ENCODE measurements at regions of chr3 and their contacts with region 1.

Region 1: DNA sequence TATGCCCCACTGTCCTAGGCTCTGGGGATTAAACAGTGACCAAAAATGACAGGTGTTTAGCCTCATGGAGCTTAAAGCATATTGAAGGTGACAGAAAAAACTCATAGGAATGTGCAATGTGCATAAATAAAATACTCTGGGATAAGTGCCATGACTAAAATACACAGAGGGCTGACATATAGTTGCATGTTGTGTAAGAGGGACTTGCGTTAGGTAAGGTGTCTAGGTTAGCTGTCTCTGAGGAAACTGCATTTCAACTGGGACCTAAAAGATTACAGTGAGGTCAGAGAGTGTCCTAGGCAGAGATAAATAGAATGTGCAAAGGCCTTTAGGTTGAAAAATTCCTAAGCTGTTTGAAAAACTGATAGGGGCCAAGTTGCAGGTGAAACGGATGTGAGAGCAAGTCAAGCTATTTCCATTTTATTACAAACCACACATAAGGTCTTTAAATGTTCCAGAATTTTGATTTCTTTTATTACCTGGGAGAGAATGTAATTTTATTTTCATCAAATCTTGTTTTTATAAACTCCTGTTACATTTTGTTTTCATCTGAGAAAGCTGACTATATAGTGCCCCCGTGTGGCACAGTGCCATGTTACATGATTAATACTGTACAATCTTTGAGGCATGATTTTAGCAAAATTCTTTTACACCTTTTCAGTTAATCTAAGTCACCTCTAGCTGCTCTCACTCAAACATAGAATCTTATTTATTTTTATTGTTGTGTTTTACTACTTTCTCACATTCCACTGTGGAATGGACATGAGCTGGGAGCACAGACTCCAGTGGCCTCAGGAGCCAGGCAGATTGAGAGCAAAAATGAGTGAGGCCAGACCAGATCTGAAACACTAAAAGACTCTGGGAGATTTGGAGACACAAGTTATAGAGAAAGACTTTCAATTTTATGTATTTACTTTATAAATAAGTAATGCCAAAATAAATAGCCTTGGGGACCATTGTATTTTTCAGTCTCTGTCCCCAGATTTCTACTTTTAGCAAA is 259.6 kb upstream of the ZNF717 start:
- DNase-seq: peak; percentile 47
- H3K4me3 Mint-ChIP-seq: no peak overlapping the region
- H3K27ac Mint-ChIP-seq: no peak overlapping the region
- H3K4me1 Mint-ChIP-seq: no peaks in the 10 kb centered on the region
- H3K27me3 Mint-ChIP-seq: no peaks in the 10 kb centered on the region
- CTCF ChIP-seq: peak; percentile 39

Region 2: GRCh38 chr3:75814797-75815196 is 230.1 kb before region 1 on chr3:
- CTCF ChIA-PET with region 1: interaction called, 7 read pairs
- POLR2A ChIA-PET with region 1: no interaction called
- intact Hi-C with region 1: loop called (anchors 2 kb)
- DNase-seq: no peak
- H3K4me3 Mint-ChIP-seq: no peak overlapping the region
- H3K27ac Mint-ChIP-seq: no peak overlapping the region
- H3K4me1 Mint-ChIP-seq: no peaks in the 10 kb centered on the region
- H3K27me3 Mint-ChIP-seq: peaks cover 10% of the 10 kb centered on the region
- CTCF ChIP-seq: no peak

Region 3: GRCh38 chr3:76024640-76025039 is 20.3 kb before region 1 on chr3:
- CTCF ChIA-PET with region 1: interaction called, 11 read pairs
- POLR2A ChIA-PET with region 1: no interaction called
- intact Hi-C with region 1: no loop called
- DNase-seq: no peak
- H3K4me3 Mint-ChIP-seq: no peak overlapping the region
- H3K27ac Mint-ChIP-seq: no peak overlapping the region
- H3K4me1 Mint-ChIP-seq: no peaks in the 10 kb centered on the region
- H3K27me3 Mint-ChIP-seq: peaks cover 18% of the 10 kb centered on the region
- CTCF ChIP-seq: peak; percentile 31

Region 4: GRCh38 chr3:76034652-76035051 is 10.2 kb before region 1 on chr3:
- CTCF ChIA-PET with region 1: interaction called, 10 read pairs
- POLR2A ChIA-PET with region 1: no interaction called
- intact Hi-C with region 1: no loop called
- DNase-seq: no peak
- H3K4me3 Mint-ChIP-seq: no peak overlapping the region
- H3K27ac Mint-ChIP-seq: no peak overlapping the region
- H3K4me1 Mint-ChIP-seq: no peaks in the 10 kb centered on the region
- H3K27me3 Mint-ChIP-seq: no peaks in the 10 kb centered on the region
- CTCF ChIP-seq: no peak

Measured in MCF 10A (cell line).